Left lung (tissue), 14 donors: ENCODE measurements at regions of chr3 and their contacts with region 1.

Region 1: GRCh38 chr3:129650256-129650872 is 43.9 kb upstream of the PLXND1 start:
- DNase-seq: peak in 3 of 4 donors; percentile 42 to 72 (median 55)
- ATAC-seq: peak; percentile 83
- H3K4me3 ChIP-seq: no peak overlapping the region
- H3K27ac ChIP-seq: no peak overlapping the region
- H3K4me1 ChIP-seq: peaks cover 21 to 28% of the 10 kb centered on the region in 2 donors
- H3K27me3 ChIP-seq: no peaks in the 10 kb centered on the region
- CTCF ChIP-seq: peak; percentile 58 to 65

Region 2: DNA sequence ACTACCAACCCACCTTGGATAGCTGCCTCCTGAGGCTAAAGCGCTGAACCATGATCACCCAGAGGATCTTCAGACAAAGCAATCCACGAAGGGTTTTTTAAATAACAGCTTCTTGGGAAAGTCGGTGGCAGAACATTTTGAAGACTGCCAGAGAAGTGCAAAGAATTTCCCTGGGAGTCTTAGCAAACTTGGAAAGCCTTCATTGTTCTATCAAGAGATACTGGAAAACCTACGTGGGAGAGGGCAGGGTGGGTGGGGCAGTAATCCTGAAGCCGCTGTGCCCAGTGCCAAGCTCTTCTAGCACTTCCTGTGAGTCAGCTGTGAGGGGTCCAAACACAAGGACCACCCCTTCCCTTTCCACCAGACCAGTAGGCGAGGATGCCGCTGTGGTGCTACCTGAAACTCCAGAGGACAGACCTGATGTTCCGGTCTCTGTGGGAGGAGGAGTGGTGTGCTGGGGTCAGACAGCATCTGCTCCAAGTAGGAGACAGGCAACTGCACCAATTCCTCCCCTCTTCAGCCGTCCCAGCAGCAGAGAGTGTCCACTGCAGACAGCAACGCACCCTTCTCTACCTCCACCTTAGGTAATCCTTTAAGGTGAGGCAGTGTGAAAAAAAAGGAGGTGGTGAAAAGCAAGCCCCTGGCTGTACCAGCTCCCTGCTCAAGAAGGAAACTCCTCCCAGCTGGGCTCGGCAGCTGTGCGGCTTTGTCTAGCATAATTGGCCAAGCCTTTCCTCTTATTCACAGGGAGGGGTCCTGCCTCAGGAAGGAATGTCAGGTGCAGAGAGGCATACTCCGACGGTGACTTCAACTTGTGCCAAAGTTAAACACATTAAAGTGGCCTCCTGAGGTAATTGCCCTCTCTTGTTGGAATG is 144.2 kb after region 1 on chr3:
- intact Hi-C with region 1: no loop called
- DNase-seq: peak; percentile 36 to 88 (median 86)
- ATAC-seq: peak; percentile 94
- H3K4me3 ChIP-seq: peak overlapping the region; percentile 20 to 32
- H3K27ac ChIP-seq: peak overlapping the region; percentile 79 to 82
- H3K4me1 ChIP-seq: peaks cover 0 to 33% of the 10 kb centered on the region in 2 donors
- H3K27me3 ChIP-seq: no peaks in the 10 kb centered on the region
- CTCF ChIP-seq: no peak

Region 3: DNA sequence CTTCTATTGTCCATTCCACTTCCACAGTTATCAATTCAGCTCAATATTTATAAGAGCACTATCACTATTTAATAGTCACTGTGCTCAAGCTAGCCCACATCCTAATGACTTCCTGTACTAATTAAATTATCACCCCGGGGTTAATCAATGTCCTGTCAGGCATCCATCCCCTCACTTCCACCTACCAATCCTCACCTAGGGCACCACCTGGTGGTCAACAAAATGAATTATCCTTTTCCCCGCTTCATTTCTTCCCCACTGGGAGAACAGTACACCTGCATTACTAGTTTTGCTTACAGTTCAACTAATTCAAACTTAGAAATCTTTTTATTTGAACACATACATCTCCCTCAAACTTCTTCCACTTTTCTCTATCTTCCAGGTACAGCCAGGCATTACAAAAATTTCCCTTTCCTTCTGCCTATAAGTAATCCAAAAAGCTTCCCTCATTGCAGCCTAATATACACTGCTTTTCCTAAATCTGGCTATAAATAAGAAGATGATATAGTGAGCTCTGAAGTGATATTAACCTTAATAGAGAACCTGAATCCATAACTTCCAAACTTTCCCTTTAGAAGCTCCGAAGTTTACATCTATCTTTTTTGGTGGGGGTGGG is 174.7 kb after region 1 on chr3:
- intact Hi-C with region 1: loop called (anchors 5 to 10 kb)
- DNase-seq: peak in 2 of 4 donors; percentile 32 to 56
- ATAC-seq: peak; percentile 74
- H3K4me3 ChIP-seq: no peak overlapping the region
- H3K27ac ChIP-seq: no peak overlapping the region
- H3K4me1 ChIP-seq: peaks cover 0 to 49% of the 10 kb centered on the region in 2 donors
- H3K27me3 ChIP-seq: no peaks in the 10 kb centered on the region
- CTCF ChIP-seq: peak; percentile 55 to 64